Activated naive CD4-positive, alpha-beta T cell treated with anti-CD3 and anti-CD28 coated beads for 36 hours (primary cell): ENCODE measurements at regions of chr20 and their contacts with region 1.

Region 1: DNA sequence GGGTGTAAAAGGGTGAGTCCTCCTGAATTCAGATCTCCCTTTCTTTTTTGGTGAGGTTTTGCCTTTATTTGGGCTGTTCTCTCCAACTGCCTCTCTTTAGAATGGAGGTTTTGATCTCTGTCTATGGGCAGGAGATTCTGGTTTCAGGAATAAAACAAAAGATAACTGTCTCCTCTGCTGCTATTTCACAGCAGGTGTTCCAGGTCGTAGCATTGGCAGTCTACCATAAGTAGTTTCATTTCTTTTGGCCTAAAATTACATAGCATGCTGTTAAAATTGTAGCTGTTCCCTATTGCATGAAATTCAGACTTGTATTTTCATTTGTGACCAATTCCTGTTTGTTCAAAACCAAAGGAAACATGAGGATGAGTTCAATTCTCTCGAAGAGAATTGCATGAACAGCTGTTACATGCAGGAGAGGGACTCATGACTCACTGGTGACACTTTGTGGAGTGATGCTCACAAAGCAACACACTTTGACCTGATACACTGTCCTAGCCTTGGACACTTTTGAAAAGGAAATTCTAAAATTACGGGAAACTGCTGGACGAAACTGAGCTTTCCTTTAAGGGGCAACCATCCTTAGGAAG is 76.8 kb upstream of the SIRPG start:
- DNase-seq: peak; percentile 65
- H3K4me3 Mint-ChIP-seq: no peak overlapping the region
- H3K27ac Mint-ChIP-seq: peak overlapping the region; percentile 5
- H3K4me1 Mint-ChIP-seq: peaks cover 37% of the 10 kb centered on the region
- H3K27me3 Mint-ChIP-seq: no peaks in the 10 kb centered on the region

Region 2: DNA sequence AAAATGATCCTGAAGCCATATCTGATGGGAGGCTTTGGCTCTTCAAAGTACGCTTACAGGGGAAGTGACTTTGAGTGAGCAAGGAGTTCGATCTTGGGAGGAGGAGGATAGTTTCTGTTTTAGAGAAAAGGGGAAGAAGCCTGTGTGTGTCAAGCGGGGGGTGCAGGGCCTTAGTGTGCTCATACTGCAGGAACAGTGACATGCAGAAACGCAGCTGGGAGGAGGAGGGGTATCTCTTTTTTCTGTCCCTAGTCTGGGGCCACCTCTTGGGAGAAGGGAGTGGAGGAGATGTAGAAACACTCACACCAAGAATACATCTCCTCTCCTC is 196.7 kb before region 1 on chr20:
- CTCF ChIA-PET with region 1: interaction called, 17 read pairs
- intact Hi-C with region 1: loop called (anchors 1 kb)
- DNase-seq: no peak
- H3K4me3 Mint-ChIP-seq: no peak overlapping the region
- H3K27ac Mint-ChIP-seq: no peak overlapping the region
- H3K4me1 Mint-ChIP-seq: peaks cover 16% of the 10 kb centered on the region
- H3K27me3 Mint-ChIP-seq: no peaks in the 10 kb centered on the region

Region 3: GRCh38 chr20:1588533-1589460 is 145.6 kb before region 1 on chr20:
- CTCF ChIA-PET with region 1: interaction called, 10 read pairs
- intact Hi-C with region 1: no loop called
- DNase-seq: peak; percentile 58
- H3K4me3 Mint-ChIP-seq: peak overlapping the region; percentile 20
- H3K27ac Mint-ChIP-seq: peak overlapping the region; percentile 88
- H3K4me1 Mint-ChIP-seq: peaks cover 42% of the 10 kb centered on the region
- H3K27me3 Mint-ChIP-seq: no peaks in the 10 kb centered on the region

Region 4: GRCh38 chr20:1663917-1664316 is 70.4 kb before region 1 on chr20:
- CTCF ChIA-PET with region 1: interaction called, 5 read pairs
- intact Hi-C with region 1: loop called (anchors 2 kb)
- DNase-seq: peak; percentile 69
- H3K4me3 Mint-ChIP-seq: peak overlapping the region; percentile 45
- H3K27ac Mint-ChIP-seq: peak overlapping the region; percentile 98
- H3K4me1 Mint-ChIP-seq: peaks cover 90% of the 10 kb centered on the region
- H3K27me3 Mint-ChIP-seq: no peaks in the 10 kb centered on the region

Region 5: GRCh38 chr20:1707588-1708449 is 26.5 kb before region 1 on chr20:
- CTCF ChIA-PET with region 1: interaction called, 4 read pairs
- intact Hi-C with region 1: loop called (anchors 2 kb)
- DNase-seq: peak; percentile 33
- H3K4me3 Mint-ChIP-seq: peak overlapping the region; percentile 33
- H3K27ac Mint-ChIP-seq: peak overlapping the region; percentile 42
- H3K4me1 Mint-ChIP-seq: peaks cover 28% of the 10 kb centered on the region
- H3K27me3 Mint-ChIP-seq: no peaks in the 10 kb centered on the region